ENCODE measurements at regions of chr17 and their contacts with region 1.

Region 1: GRCh38 chr17:59311130-59311920 is 20.1 kb upstream of the YPEL2 start:
- DNase-seq: peak; percentile 58
- H3K4me3 ChIP-seq: no peak overlapping the region
- H3K27ac ChIP-seq: no peak overlapping the region
- H3K4me1 ChIP-seq: no peaks in the 10 kb centered on the region
- H3K27me3 ChIP-seq: no peaks in the 10 kb centered on the region
- CTCF ChIP-seq: no peak

Region 2: DNA sequence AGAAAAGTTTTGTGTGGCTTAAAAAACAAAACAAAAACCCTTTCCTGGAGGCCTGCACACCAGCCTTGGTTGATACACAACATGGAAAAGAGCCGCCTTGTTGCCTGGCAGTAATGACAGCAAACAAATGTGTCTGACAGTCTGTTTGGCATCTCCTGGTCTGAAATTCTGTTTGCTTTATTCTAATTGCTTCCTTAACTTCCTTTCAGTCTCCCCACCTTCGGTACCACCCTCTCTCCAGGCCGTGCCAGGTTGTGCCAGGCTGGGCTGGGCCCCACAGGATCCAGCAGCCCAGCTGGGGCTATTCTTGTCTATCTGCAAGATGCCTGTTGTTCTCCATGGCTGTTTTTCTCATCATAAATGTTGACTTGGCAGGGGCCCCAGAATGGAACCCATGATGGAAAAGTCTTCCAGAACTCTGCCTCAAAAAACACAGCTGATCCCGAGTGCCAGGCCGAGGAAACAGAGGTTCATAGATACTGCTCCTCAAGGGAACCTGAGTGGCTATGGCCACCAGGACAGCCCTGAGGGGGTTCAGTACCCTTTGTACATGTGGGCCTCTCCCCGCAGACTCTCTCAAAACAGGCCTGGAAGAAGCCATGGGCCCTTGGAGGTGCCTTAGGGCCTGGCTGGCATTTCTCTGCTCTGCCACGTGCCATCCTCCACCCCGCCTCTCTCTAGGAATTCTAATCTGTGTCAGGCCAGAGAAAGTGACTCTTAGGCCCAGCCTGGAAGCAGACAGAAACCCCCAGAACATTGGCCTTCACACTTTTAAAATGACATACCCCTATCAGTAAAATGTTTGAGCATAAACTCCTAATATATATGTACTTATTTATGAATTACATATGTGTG is 70.6 kb after region 1 on chr17:
- intact Hi-C with region 1: no loop called
- DNase-seq: peak; percentile 84
- H3K4me3 ChIP-seq: no peak overlapping the region
- H3K27ac ChIP-seq: peak overlapping the region; percentile 66
- H3K4me1 ChIP-seq: peaks cover 28% of the 10 kb centered on the region
- H3K27me3 ChIP-seq: no peaks in the 10 kb centered on the region
- CTCF ChIP-seq: no peak

Region 3: GRCh38 chr17:59440784-59441441 is 129.6 kb after region 1 on chr17:
- intact Hi-C with region 1: loop called (anchors 5 kb)
- DNase-seq: peak; percentile 96
- H3K4me3 ChIP-seq: no peak overlapping the region
- H3K27ac ChIP-seq: no peak overlapping the region
- H3K4me1 ChIP-seq: no peaks in the 10 kb centered on the region
- H3K27me3 ChIP-seq: no peaks in the 10 kb centered on the region
- CTCF ChIP-seq: peak; percentile 73